Dendritic cell treated with granulocyte-macrophage colony-stimulating factor and Interleukin-4, amounts not matched to agents 40 ng/mL and 50 ng/mL, for 4 days (primary cell): ENCODE measurements at regions of chr17 and their contacts with region 1.

Region 1: DNA sequence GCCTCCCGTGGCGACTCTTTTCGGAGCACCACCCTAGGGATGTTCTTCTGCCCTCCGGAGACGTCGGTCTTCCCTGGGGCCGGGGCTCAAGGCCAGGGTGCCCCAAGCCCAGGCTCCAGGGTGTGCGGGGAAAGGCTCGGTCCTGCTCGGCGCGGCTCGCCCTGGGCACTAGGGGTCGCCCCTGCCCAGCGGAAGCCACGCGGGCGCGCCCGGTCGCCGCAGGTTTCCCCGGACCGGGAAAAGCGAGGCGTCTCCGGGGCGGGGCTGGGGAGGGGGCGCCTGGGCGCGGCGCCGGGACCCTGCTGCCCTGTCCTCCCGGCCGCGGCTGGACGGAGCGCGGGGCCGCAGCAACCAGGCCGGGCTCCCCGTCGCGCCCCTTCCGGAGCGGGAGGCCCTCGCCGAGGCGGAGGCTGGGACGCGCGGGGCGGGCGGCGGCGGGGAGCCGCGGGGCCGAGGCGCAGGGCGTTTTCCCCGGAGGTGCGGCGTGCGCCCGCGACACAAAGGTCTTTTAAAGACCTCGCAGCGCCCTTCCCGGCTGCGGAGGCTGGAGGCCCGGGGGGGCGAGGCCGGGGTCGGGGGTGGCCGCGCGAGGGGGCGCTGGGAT is 76.4 kb downstream of the MRC2 start:
- H3K4me3 Mint-ChIP-seq: peak overlapping the region; percentile 71
- H3K27ac Mint-ChIP-seq: no peak overlapping the region
- H3K4me1 Mint-ChIP-seq: peaks cover 5% of the 10 kb centered on the region
- H3K27me3 Mint-ChIP-seq: peaks cover 44% of the 10 kb centered on the region

Region 2: GRCh38 chr17:62968445-62968923 is 264.6 kb after region 1 on chr17:
- intact Hi-C with region 1: loop called (anchors 1 kb)
- H3K4me3 Mint-ChIP-seq: no peak overlapping the region
- H3K27ac Mint-ChIP-seq: no peak overlapping the region
- H3K4me1 Mint-ChIP-seq: peaks cover 22% of the 10 kb centered on the region
- H3K27me3 Mint-ChIP-seq: peaks cover 13% of the 10 kb centered on the region

Region 3: DNA sequence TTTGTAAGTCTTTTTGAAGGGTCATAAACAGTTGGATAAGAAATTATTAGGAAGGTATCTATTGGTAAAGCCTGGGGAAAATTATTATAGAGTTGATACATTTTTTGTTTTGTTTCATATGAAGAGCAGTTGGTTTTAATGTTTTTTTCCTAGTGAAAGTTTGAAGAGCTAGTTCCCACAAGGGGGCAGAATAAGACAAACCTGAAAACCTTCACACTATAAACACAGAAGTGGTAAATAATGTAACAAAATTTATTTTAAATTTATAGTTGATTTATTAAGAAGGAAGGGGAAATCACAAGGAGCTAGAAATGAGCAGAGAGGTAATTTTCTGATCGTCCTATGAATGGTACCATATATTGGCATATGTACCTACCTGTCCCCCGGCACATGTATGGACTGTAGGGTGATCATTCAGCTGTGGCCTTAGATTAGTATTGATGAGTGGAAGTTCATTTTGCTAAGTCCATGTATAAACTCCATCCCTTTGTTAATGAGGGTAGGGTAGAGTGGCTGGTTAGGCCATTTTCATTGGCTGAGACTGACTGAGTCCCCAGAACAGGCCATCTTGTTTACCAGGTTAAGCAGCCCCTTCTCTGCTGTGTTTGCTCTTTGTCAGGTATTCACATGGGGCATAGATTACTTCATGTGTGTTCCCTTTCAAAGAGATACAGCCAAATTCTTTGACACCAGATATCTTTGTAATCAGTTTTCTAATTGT is 378.6 kb after region 1 on chr17:
- intact Hi-C with region 1: loop called (anchors 10 kb)
- H3K4me3 Mint-ChIP-seq: no peak overlapping the region
- H3K27ac Mint-ChIP-seq: no peak overlapping the region
- H3K4me1 Mint-ChIP-seq: peaks cover 7% of the 10 kb centered on the region
- H3K27me3 Mint-ChIP-seq: no peaks in the 10 kb centered on the region

Region 4: DNA sequence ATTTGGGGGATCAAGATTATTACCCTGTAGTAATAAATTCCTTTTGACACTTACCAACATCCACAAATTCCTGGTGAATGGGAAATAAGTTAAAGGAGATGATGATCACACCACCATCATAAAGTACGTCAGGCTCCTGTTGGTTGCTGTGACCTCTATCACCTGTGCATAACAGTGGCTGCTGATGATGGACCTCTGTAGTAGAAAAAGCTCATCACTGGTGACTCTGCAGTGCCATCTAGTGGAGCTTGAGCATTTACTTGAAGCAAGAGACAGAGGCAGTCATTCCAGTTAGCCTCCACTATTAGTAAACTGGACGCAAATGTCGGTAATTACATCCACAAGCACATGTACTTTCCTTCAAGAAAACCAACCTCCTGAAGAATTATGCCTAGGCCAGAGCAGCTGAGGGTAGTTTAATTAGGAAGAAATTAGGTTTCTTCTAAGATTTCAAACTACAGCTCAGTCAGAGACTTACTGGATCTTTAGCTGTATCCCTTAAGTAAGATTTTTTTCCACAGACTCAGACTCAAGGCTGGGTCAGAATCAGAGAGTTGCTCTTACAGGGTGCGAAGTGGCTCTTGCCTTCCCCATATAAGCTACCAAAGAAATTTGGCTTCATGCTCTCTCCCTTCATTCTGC is 702.9 kb after region 1 on chr17:
- intact Hi-C with region 1: loop called (anchors 2 kb)
- H3K4me3 Mint-ChIP-seq: no peak overlapping the region
- H3K27ac Mint-ChIP-seq: no peak overlapping the region
- H3K4me1 Mint-ChIP-seq: peaks cover 5% of the 10 kb centered on the region
- H3K27me3 Mint-ChIP-seq: no peaks in the 10 kb centered on the region